PC-3 (cell line): ENCODE measurements at regions of chr3 and their contacts with region 1.

Region 1: DNA sequence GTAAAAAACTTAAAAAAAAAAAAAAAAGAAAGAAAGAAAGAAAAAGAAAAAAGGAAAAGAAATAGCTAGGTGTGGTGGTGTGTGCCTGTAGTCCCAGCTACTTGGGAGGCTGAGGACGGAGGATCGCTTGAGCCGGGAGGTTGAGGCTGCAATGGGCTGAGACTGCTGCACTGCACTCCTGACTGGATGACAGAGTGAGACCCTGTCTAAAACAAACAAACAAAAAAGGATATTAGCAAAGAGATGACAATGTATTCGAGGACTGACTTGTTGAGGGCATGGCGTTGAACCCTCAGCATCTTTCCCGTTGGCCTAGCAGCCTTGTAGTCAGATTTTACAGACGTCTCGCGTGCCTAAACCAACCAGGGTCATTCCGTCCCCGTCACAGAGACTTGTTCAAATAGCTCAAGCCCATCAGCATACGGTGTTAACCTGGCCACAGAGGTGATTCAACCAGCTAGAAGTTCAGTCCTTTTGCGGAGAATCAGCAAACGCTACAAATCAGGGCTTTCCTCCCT is 528 bp upstream of the NIT2 start:
- DNase-seq: no peak
- ATAC-seq: peak; percentile 29
- H3K4me3 ChIP-seq: peak overlapping the region; percentile 79
- H3K27ac ChIP-seq: no peak overlapping the region; the same call in 1 of the 2 replicates
- H3K4me1 ChIP-seq: peaks cover 15% of the 10 kb centered on the region
- H3K27me3 ChIP-seq: no peaks in the 10 kb centered on the region
- CTCF ChIP-seq: no peak

Region 2: DNA sequence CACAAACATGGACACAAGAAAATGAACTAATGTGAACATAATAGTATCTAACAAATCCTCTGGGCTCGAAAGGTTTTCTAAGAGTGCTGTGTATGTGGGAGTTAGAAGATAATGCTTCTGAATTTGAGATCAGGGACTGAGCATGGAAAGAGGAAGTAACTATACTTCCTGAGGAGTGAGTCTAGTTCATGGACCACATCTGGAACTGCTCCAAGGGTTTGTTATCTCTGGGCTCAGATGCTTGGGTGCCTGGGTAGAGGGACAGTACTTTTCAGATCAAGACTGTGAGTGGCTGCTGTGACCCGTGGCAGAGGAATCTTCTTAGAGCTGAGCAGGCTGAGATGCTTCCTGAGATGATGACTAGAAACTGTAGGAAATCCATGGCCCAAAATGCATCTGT is 44.7 kb before region 1 on chr3:
- CTCF ChIA-PET with region 1: no interaction called
- POLR2A ChIA-PET with region 1: no interaction called
- intact Hi-C with region 1: no loop called
- DNase-seq: no peak
- ATAC-seq: no peak
- H3K4me3 ChIP-seq: no peak overlapping the region
- H3K27ac ChIP-seq: no peak overlapping the region
- H3K4me1 ChIP-seq: no peaks in the 10 kb centered on the region
- H3K27me3 ChIP-seq: no peaks in the 10 kb centered on the region
- CTCF ChIP-seq: no peak

Region 3: DNA sequence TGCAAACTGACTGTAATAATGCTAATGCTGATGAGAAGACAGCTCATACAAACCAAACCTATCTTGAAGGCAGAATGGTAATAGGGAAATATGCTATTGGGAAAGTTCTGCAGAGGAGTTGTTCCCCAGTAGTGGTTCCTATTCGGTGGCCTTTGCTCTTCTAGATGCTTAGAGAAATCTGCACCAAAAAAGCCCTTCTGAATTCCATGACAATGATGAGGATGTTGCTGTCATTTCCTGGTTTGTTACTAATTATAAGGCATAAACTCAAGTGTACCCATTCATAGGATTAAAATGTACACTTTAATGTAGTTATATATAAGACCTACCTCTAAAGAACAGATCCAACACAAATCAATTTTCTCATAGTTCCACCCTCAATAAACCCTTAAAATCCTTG is 36.7 kb after region 1 on chr3:
- CTCF ChIA-PET with region 1: interaction called, 17 read pairs
- POLR2A ChIA-PET with region 1: no interaction called
- intact Hi-C with region 1: no loop called
- DNase-seq: peak; percentile 11
- ATAC-seq: no peak
- H3K4me3 ChIP-seq: no peak overlapping the region
- H3K27ac ChIP-seq: no peak overlapping the region
- H3K4me1 ChIP-seq: 0 out of 2 replicates have a peak, but pooled peaks cover 2% of the 10 kb centered on the region
- H3K27me3 ChIP-seq: no peaks in the 10 kb centered on the region
- CTCF ChIP-seq: no peak